ENCODE measurements at regions of chr16 and their contacts with region 1.

Region 1: GRCh38 chr16:49592546-49593423 is 219.2 kb downstream of the C16orf78 start:
- DNase-seq: peak in 6 of 9 donors; percentile 24 to 61 (median 52)
- ATAC-seq: peak; percentile 66
- H3K4me3 ChIP-seq: no peak overlapping the region
- H3K4me3 Mint-ChIP-seq: no peak overlapping the region
- H3K27ac ChIP-seq: no peak overlapping the region
- H3K27ac Mint-ChIP-seq: peak overlapping the region in 4 of 9 donors; percentile 67 to 86 (median 72)
- H3K4me1 ChIP-seq: no peaks in the 10 kb centered on the region
- H3K4me1 Mint-ChIP-seq: peaks cover 2 to 42% (median 35%) of the 10 kb centered on the region in 7 donors
- H3K27me3 ChIP-seq: no peaks in the 10 kb centered on the region
- H3K27me3 Mint-ChIP-seq: peaks cover 5 to 10% (median 6%) of the 10 kb centered on the region in 5 donors

Region 2: DNA sequence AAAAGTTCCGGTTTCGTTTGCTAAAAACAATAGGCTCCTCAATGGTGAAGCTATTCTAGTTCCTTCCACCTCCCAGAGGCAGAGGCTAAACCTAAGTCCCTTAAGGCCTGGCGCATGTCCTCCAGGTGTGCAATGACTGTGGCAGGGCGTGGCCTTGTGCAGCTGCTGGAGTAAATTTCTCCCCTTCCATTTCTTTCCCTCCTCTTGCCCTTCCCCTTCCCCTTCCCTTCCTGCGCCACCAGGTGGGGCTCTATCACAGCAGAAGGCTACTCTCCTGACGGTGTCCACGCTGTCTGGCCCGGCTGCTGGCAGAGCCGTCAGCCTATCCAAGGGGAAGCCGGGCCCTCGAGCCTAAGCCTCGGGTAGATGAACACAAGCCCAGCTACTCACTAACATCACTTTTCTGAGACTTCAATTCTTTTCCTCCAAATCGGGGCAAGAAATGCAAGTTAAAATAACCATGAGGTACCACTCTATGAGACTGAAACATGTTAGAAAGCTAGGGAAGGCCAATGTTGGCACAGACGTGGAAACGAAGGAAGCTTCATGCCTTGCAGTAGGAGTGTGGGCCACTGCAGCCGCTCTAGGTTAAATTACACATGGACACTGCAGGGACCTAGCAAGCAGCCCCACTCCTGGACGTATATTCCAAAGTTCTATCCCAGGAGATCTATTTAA is 184.8 kb before region 1 on chr16:
- CTCF ChIA-PET with region 1: interaction called, 8 read pairs
- POLR2A ChIA-PET with region 1: interaction called, 3 read pairs
- intact Hi-C with region 1: loop called in 1 of 2 experiments (anchors 1 kb)
- DNase-seq: peak; percentile 38 to 67 (median 60)
- ATAC-seq: peak; percentile 71
- H3K4me3 ChIP-seq: no peak overlapping the region
- H3K4me3 Mint-ChIP-seq: peak overlapping the region in 3 of 10 donors; percentile 12 to 53 (median 17)
- H3K27ac ChIP-seq: no peak overlapping the region
- H3K27ac Mint-ChIP-seq: no peak overlapping the region
- H3K4me1 ChIP-seq: no peaks in the 10 kb centered on the region
- H3K4me1 Mint-ChIP-seq: no peaks in the 10 kb centered on the region
- H3K27me3 ChIP-seq: no peaks in the 10 kb centered on the region
- H3K27me3 Mint-ChIP-seq: peaks cover 5 to 10% (median 6%) of the 10 kb centered on the region in 5 donors

Region 3: GRCh38 chr16:49491771-49492761 is 100.7 kb before region 1 on chr16:
- CTCF ChIA-PET with region 1: no interaction called
- POLR2A ChIA-PET with region 1: no interaction called
- intact Hi-C with region 1: loop called in 1 of 2 experiments (anchors 1 kb)
- DNase-seq: peak in 8 of 9 donors; percentile 20 to 63 (median 40)
- ATAC-seq: peak; percentile 60
- H3K4me3 ChIP-seq: no peak overlapping the region
- H3K4me3 Mint-ChIP-seq: peak overlapping the region in 7 of 10 donors; percentile 12 to 66 (median 39)
- H3K27ac ChIP-seq: no peak overlapping the region
- H3K27ac Mint-ChIP-seq: no peak overlapping the region
- H3K4me1 ChIP-seq: no peaks in the 10 kb centered on the region
- H3K4me1 Mint-ChIP-seq: peaks cover 0 to 15% (median 6%) of the 10 kb centered on the region in 7 donors
- H3K27me3 ChIP-seq: no peaks in the 10 kb centered on the region
- H3K27me3 Mint-ChIP-seq: no peaks in the 10 kb centered on the region

Region 4: GRCh38 chr16:49528060-49528865 is 64.5 kb before region 1 on chr16:
- CTCF ChIA-PET with region 1: no interaction called
- POLR2A ChIA-PET with region 1: no interaction called
- intact Hi-C with region 1: loop called in 1 of 2 experiments (anchors 1 kb)
- DNase-seq: peak in 6 of 9 donors; percentile 7 to 42 (median 31)
- ATAC-seq: peak; percentile 55
- H3K4me3 ChIP-seq: peak overlapping the region; percentile 56
- H3K4me3 Mint-ChIP-seq: peak overlapping the region; percentile 73 to 95 (median 88)
- H3K27ac ChIP-seq: peak overlapping the region; percentile 66
- H3K27ac Mint-ChIP-seq: peak overlapping the region; percentile 38 to 98 (median 94)
- H3K4me1 ChIP-seq: no peaks in the 10 kb centered on the region
- H3K4me1 Mint-ChIP-seq: peaks cover 6 to 26% (median 16%) of the 10 kb centered on the region in 7 donors
- H3K27me3 ChIP-seq: no peaks in the 10 kb centered on the region
- H3K27me3 Mint-ChIP-seq: peaks cover 0 to 8% (median 0%) of the 10 kb centered on the region in 5 donors

Region 5: GRCh38 chr16:49855280-49855821 is 262.6 kb after region 1 on chr16:
- CTCF ChIA-PET with region 1: no interaction called
- POLR2A ChIA-PET with region 1: no interaction called
- intact Hi-C with region 1: loop called in 1 of 2 experiments (anchors 10 kb)
- DNase-seq: peak; percentile 25 to 60 (median 58)
- ATAC-seq: peak; percentile 76
- H3K4me3 ChIP-seq: no peak overlapping the region
- H3K4me3 Mint-ChIP-seq: peak overlapping the region in 7 of 10 donors; percentile 16 to 90 (median 41)
- H3K27ac ChIP-seq: no peak overlapping the region
- H3K27ac Mint-ChIP-seq: no peak overlapping the region
- H3K4me1 ChIP-seq: peaks cover 0 to 5% of the 10 kb centered on the region in 2 donors
- H3K4me1 Mint-ChIP-seq: peaks cover 0 to 20% (median 11%) of the 10 kb centered on the region in 7 donors
- H3K27me3 ChIP-seq: peaks cover 0 to 4% of the 10 kb centered on the region in 2 donors
- H3K27me3 Mint-ChIP-seq: peaks cover 28 to 67% (median 45%) of the 10 kb centered on the region in 5 donors